Pancreas (tissue), 10 donors: ENCODE measurements at regions of chr14 and their contacts with region 1.

Region 1: GRCh38 chr14:102046343-102047278 is 40.2 kb downstream of the HSP90AA1 start:
- DNase-seq: peak; percentile 88 to 95 (median 92)
- ATAC-seq: peak; percentile 97 to 99 (median 98)
- H3K4me3 ChIP-seq: no peak overlapping the region
- H3K27ac ChIP-seq: peak overlapping the region in 1 of 4 donors; percentile 5
- H3K4me1 ChIP-seq: peaks cover 0 to 3% (median 0%) of the 10 kb centered on the region in 3 donors
- H3K27me3 ChIP-seq: no peaks in the 10 kb centered on the region
- CTCF ChIP-seq: peak; percentile 40 to 68 (median 51)

Region 2: DNA sequence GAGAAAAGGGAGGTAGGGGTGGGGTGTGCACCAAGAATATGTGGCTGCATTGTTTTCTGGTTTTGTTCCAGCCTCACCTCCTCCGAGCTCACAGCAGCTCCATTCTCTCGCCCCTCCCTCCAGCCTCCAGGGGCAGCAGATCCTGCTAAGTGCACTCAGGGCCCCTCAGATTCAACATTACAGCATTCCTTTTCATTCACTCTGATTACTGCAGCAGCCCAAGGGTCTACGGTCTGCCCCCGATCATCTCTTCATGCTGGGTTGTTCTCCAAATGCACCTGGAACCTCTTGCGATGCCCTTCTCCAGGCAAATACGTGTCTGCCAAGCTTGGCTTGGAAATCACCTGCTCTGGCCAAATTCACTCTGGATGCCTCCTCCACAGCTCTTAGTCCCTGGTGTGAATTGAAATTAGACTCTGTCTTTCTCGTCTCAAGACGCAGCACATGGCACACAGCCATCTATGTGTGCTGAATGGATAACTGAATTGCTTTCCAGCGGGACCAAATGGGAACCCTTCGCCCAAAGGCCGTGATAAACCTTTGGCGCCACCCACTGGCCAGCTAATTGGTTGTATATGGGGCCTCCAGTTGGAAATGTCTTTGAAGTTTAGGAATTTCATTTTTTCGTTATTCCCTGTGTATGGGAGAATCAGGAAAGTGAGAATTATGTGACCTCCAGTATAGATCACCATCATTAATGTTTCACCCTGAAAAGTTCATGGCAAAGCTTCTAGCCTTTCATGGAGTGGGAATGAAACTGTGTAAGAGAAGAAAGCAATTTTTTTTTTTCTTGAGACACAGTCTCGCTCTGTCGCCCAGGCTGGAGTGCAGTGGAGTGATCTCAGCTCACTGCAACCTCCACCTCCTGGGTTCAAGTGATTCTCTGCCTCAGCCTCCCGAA is 49.9 kb after region 1 on chr14:
- intact Hi-C with region 1: loop called in 2 of 3 experiments (anchors 5 kb)
- DNase-seq: peak; percentile 69 to 92 (median 84)
- ATAC-seq: peak; percentile 91 to 95 (median 94)
- H3K4me3 ChIP-seq: no peak overlapping the region
- H3K27ac ChIP-seq: no peak overlapping the region
- H3K4me1 ChIP-seq: no peaks in the 10 kb centered on the region
- H3K27me3 ChIP-seq: no peaks in the 10 kb centered on the region
- CTCF ChIP-seq: peak; percentile 37 to 69 (median 61)